ENCODE measurements at regions of chr11 and their contacts with region 1.

Region 1: DNA sequence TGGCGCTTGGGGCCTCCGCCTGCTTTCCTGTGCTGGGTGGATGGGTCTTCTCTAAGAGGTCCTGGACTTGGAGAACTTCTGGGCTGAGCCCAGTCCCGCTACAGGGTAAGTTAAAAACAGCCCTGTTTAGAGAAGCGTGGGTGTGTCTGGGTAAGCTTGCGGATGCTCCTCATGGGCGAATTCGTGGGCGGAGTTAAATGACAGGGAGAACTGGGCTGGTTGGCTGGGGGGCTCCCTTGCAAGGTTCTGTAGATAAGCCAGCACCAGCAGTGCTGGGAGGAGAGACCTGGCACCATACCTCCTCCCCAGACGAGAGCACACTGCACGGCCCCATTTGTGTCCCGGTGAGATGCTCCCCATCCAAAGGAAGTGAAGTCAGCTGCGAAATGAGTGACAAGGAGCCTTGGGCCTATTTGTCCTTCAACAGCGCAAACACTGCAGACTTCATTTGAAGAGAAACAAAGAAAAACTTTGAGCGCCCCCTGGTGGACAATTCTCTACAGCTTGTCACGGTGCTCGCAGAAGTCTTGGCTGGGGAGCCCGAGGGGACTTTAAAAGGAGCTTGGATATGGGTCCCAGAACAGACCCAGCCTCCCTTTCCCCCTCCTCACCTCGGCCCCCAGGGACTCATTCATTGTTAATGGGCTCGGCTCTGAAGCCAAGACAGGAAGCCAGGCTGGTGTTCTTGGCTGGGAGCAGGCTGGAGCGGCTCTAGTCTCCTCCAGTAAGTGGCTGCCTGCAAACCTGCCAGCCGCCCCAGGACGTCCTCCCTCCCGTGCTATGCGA is 39.5 kb downstream of the TP53I11 start:
- DNase-seq: peak; percentile 80
- H3K4me3 ChIP-seq: no peak overlapping the region
- H3K27ac ChIP-seq: no peak overlapping the region
- H3K4me1 ChIP-seq: peaks cover 2% of the 10 kb centered on the region
- H3K27me3 ChIP-seq: no peaks in the 10 kb centered on the region
- CTCF ChIP-seq: peak; percentile 73 to 88
- POLR2A ChIP-seq: no peak

Region 2: GRCh38 chr11:44611687-44612434 is 299.4 kb before region 1 on chr11:
- CTCF ChIA-PET with region 1: interaction called, 39 read pairs
- POLR2A ChIA-PET with region 1: no interaction called
- dilution Hi-C with region 1: no loop called
- intact Hi-C with region 1: no loop called
- DNase-seq: no peak
- H3K4me3 ChIP-seq: no peak overlapping the region
- H3K27ac ChIP-seq: no peak overlapping the region
- H3K4me1 ChIP-seq: peaks cover 9% of the 10 kb centered on the region
- H3K27me3 ChIP-seq: no peaks in the 10 kb centered on the region
- CTCF ChIP-seq: no peak
- POLR2A ChIP-seq: no peak

Region 3: DNA sequence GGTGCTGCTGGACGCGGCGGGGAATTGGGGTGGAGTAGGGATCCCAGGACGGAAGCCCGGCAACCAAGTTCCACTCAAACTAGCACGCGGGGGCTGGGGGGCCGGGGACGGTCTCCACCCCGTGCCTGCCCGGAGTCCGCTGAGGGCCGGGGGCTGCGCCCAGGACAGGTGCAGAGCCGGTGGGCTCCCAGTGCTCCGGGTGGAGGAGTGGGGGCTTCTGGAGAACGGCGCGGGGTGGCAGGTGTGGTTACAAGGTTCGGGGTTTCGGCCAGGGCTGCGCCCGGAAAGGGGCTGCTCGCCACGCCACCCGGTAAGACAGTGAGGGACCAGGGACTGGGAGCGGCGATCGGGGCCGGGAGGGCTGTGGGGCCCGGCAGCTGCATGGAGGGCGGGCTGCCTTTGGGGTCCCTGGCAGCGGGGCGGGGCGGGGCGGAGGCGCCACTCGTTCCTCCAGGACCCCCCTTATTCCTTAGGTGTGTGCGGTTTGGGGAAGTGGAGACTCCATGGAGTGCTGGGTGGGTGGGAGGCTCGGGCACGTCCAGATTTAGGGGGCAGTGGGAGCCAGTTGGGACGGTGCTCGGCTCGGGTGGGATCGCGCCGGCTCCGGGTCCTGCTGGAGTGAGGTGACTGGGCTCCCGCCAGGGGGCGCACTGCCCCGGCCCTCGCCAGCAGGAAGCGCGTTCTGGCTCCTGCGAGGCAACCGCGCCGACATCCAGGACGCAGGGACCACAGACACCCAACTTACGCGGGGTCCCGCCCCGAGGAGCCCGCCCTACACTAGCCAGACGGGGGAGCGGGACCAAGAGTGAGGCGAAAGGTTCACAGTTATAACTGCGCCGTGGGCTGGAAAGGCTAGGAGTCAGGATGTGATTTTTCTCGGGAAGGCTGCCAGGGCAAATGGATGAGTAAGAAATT is 183.6 kb before region 1 on chr11:
- CTCF ChIA-PET with region 1: interaction called, 12 read pairs
- POLR2A ChIA-PET with region 1: no interaction called
- dilution Hi-C with region 1: no loop called
- intact Hi-C with region 1: loop called (anchors 1 kb)
- DNase-seq: peak; percentile 82
- H3K4me3 ChIP-seq: peak overlapping the region; percentile 51 to 73 (median 61)
- H3K27ac ChIP-seq: no peak overlapping the region
- H3K4me1 ChIP-seq: peaks cover 35% of the 10 kb centered on the region
- H3K27me3 ChIP-seq: no peaks in the 10 kb centered on the region
- CTCF ChIP-seq: peak; percentile 89 to 97
- POLR2A ChIP-seq: no peak

Region 4: GRCh38 chr11:44775366-44775984 is 135.7 kb before region 1 on chr11:
- CTCF ChIA-PET with region 1: interaction called, 11 read pairs
- POLR2A ChIA-PET with region 1: no interaction called
- dilution Hi-C with region 1: no loop called
- intact Hi-C with region 1: no loop called
- DNase-seq: peak; percentile 60
- H3K4me3 ChIP-seq: no peak overlapping the region
- H3K27ac ChIP-seq: peak overlapping the region; percentile 58
- H3K4me1 ChIP-seq: peaks cover 21% of the 10 kb centered on the region
- H3K27me3 ChIP-seq: no peaks in the 10 kb centered on the region
- CTCF ChIP-seq: peak; percentile 75 to 86
- POLR2A ChIP-seq: no peak

Region 5: DNA sequence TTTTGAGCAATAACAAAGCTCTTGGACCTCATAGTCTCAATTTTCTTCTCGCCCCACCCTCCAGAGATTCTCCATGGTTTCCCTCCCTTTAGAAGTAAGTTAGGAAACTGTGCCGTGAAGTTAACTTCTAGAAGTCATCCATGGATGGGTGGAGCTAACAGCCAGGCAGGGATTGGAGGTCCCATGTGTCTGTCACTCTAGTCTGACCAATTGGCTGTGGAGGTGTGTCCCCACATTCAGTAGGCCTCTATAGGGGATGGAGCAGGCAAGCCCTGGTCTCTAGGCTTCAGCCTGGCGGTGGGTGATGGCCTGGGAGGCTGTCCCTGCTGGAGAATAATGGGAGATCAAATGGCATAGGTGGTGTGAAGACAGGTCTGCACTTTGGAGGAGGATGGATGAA is 11.3 kb before region 1 on chr11:
- CTCF ChIA-PET with region 1: interaction called, 13 read pairs
- POLR2A ChIA-PET with region 1: no interaction called
- dilution Hi-C with region 1: no loop called
- intact Hi-C with region 1: no loop called
- DNase-seq: peak; percentile 56
- H3K4me3 ChIP-seq: no peak overlapping the region
- H3K27ac ChIP-seq: no peak overlapping the region
- H3K4me1 ChIP-seq: no peaks in the 10 kb centered on the region
- H3K27me3 ChIP-seq: no peaks in the 10 kb centered on the region
- CTCF ChIP-seq: no peak
- POLR2A ChIP-seq: no peak

Region 6: DNA sequence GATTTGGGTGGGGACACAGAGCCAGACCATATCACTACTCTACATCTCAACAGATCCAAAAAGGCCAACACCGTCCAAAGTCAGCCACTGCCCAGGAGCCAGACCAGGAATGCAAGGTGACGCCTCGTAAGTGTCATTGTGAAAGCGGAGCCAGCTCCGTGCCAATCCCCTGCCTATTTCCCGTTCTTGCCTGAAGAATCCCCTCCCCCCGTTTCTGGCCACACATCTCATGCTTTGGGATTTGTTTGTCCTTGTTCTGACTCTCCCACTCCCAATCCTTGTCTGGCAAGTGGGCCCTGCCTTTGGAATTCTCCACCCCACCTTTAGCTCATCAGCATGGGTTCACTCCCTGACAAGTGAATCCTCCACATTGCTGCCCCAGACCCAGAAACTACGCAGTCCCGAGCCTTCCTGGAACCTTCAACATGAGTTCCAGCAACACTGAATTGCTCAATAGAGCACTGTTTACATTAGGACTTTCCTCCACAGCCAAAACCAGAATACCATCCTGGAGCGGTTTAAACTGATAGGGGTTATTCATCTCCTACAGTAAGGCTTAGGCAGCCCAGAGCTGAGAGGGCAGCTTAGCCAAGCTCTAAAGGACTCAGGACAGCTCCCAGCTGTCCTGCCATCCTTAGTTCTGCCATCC is 887.7 kb after region 1 on chr11:
- CTCF ChIA-PET with region 1: no interaction called
- POLR2A ChIA-PET with region 1: interaction called, 11 read pairs
- dilution Hi-C with region 1: no loop called
- intact Hi-C with region 1: no loop called
- DNase-seq: no peak
- H3K4me3 ChIP-seq: no peak overlapping the region
- H3K27ac ChIP-seq: no peak overlapping the region
- H3K4me1 ChIP-seq: peaks cover 6% of the 10 kb centered on the region
- H3K27me3 ChIP-seq: peaks cover 0 to 3% of the 10 kb centered on the region in 2 experiments
- CTCF ChIP-seq: no peak
- POLR2A ChIP-seq: no peak

Measured in endothelial cell of umbilical vein (primary cell).